IMR-90 (cell line): ENCODE measurements at regions of chr19 and their contacts with region 1.

Region 1: DNA sequence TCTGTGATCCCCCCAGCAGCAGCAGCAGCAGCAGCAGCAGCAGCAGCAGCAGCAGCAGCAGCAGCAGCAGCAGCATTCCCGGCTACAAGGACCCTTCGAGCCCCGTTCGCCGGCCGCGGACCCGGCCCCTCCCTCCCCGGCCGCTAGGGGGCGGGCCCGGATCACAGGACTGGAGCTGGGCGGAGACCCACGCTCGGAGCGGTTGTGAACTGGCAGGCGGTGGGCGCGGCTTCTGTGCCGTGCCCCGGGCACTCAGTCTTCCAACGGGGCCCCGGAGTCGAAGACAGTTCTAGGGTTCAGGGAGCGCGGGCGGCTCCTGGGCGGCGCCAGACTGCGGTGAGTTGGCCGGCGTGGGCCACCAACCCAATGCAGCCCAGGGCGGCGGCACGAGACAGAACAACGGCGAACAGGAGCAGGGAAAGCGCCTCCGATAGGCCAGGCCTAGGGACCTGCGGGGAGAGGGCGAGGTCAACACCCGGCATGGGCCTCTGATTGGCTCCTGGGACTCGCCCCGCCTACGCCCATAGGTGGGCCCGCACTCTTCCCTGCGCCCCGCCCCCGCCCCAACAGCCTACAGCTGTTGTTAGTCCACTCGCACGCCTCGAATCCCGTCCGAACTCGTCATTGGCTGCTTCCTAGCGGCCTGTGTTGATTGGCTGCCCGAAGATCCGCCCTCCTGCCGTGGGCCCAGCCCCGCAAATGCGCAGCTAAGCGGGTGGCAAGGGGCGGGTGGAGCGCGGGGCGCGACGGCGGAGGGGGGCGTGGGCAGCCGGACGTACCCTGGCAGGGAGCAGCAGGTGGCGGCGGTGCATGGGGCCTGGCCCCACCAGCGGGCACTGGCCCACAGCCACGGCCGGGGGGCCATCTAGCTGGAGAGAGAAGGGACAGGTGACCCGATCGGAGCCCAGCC is 1.4 kb upstream of the SIX5 start:
- DNase-seq: peak; percentile 97
- ATAC-seq: peak; percentile 63
- H3K4me3 ChIP-seq: peak overlapping the region; percentile 34
- H3K27ac ChIP-seq: peak overlapping the region; percentile 89
- H3K4me1 ChIP-seq: peaks cover 13% of the 10 kb centered on the region
- H3K27me3 ChIP-seq: no peaks in the 10 kb centered on the region
- CTCF ChIP-seq: peak; percentile 82
- POLR2A ChIP-seq: no peak
- RAD21 ChIP-seq: peak; percentile 67

Region 2: DNA sequence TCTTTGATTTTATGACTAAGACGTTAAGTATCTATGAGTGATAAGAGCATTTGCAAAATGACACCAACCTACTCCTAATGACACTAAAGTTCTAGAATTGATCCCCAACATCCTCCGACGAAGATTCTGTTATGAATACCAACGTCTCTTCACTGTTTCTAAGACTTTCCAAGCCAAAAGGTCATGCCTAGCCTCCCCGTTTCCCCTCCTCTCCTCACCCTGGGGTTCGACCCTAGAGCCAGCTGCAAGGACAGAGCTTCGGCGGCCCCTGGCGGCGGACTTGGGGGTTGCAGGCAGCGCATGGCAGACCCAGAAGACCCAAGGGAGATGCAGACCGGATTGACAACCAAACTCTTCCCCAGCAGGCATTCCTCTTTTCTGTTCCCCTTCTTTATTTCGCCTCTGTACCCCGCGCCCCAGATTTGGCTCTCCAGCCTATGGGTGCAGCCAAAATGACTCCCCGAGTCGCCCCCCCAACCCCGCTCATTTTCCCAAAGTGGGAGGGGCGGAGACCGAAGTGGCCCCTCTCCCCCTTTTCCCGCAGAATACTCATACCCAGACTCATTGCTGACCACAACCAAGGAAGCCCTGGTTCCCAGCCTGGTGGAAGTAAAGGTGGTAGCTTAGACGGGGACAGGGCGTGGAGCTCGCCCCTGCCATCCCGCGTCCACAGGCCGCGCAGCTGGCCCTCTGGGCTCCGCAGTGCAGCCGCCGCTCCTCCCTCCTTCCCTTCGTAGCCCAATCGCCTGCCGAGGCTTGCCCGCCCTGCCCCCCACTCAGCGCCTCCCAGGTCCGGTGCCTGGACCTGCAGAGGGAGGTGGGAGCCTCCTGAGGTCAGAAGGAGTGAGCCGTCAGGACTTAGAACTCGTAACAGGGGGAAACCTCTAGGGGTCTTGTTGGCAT is 127.2 kb before region 1 on chr19:
- CTCF ChIA-PET with region 1: no interaction called
- POLR2A ChIA-PET with region 1: interaction called, 17 read pairs
- dilution Hi-C with region 1: no loop called
- in situ Hi-C with region 1: no loop called
- intact Hi-C with region 1: no loop called
- DNase-seq: peak; percentile 61
- ATAC-seq: peak; percentile 19
- H3K4me3 ChIP-seq: no peak overlapping the region
- H3K27ac ChIP-seq: no peak overlapping the region
- H3K4me1 ChIP-seq: peaks cover 13% of the 10 kb centered on the region
- H3K27me3 ChIP-seq: no peaks in the 10 kb centered on the region
- CTCF ChIP-seq: peak; percentile 94
- POLR2A ChIP-seq: no peak
- RAD21 ChIP-seq: peak; percentile 88

Region 3: DNA sequence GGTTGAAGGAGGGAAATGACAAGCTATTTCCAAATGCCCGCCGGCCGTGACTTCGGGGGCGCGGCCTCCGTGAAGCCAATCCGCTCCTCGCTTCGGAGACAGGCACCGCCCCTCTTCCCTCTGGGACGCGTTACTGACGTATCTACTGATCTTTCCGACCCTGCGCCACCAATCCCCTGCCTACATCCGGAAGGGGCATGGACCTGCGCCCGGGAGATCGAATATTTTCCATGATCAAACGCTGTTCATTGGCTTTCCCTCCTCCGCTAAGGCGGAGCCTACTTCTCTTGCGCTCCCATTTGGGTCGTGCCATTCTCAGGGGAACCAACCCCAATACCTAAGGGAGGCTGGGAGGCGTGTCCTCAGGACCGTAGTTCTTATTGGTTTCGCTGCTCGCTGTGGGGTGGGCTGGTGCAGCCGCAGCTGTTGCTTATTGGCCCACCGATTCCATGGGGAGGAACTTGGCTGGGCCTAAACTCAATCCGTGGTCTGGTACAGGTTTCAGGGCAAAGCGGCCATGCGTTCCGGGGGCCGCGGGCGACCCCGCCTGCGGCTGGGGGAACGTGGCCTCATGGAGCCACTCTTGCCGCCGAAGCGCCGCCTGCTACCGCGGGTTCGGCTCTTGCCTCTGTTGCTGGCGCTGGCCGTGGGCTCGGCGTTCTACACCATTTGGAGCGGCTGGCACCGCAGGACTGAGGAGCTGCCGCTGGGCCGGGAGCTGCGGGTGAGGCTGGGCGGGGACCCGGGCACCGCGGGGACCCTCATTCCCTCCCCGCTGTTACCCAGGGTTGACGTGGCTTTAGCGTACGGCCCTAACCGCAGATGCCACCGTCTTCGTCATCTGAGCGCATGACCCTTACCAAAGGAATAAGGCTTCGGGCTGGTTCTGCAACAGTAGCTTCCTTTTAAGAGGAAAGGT is 78.0 kb before region 1 on chr19 and contains the start of gene QPCTL:
- CTCF ChIA-PET with region 1: interaction called, 4 read pairs
- POLR2A ChIA-PET with region 1: interaction called, 6 read pairs
- dilution Hi-C with region 1: no loop called
- in situ Hi-C with region 1: no loop called
- intact Hi-C with region 1: loop called (anchors 2 kb)
- DNase-seq: peak; percentile 100
- ATAC-seq: peak; percentile 94
- H3K4me3 ChIP-seq: peak within 1 kb of the TSS; percentile 89
- H3K27ac ChIP-seq: peak within 1 kb of the TSS; percentile 83
- H3K4me1 ChIP-seq: peaks cover 4% of the 10 kb centered on the region
- H3K27me3 ChIP-seq: no peaks in the 10 kb centered on the region
- CTCF ChIP-seq: no peak
- POLR2A ChIP-seq: peak; percentile 91
- RAD21 ChIP-seq: no peak
- total RNA-seq, gene QPCTL: 6.6 and 7.8 TPM in 2 replicates

Region 4: DNA sequence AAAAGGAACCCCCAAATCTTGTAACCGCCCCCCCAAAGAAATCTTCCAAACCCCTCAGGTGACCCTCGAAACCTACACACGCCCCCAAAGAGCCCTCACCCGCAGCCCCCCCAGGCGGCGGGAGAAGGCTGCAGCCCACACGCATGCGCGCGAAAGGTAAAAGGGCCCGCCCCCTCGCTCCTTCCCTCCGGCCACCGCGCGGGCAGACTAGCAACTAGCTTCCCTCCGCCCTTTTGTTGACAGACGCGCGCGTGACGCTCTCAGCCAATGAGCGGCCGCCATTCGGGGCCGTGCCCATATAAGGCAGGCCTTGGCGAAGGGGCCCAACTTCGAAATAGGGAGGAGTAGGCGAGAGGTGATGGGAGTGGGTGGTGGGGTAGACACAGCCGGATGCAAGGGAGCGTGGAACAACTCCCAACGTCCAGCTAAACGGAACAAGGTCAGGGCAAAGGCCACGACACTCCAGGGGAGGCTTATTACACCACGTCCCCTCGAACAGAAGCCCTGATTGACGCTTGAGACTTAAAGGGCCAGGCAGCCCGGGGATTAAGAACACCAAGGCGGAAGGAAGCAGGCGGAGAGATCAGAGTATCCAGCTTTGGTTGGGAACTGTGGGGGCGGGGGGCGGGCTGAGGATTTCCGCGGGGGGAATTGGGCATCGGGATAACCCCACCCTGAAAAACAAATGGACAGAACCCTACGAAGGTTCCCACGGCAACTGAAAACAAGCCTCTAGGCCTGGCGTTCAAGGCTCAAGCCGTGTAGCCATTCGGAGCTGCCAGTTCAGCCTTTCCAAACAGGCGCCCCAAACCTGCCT is 53.1 kb before region 1 on chr19:
- CTCF ChIA-PET with region 1: no interaction called
- POLR2A ChIA-PET with region 1: interaction called, 5 read pairs
- dilution Hi-C with region 1: no loop called
- in situ Hi-C with region 1: no loop called
- intact Hi-C with region 1: loop called (anchors 1 kb)
- DNase-seq: peak; percentile 97
- ATAC-seq: peak; percentile 95
- H3K4me3 ChIP-seq: peak overlapping the region; percentile 54
- H3K27ac ChIP-seq: peak overlapping the region; percentile 93
- H3K4me1 ChIP-seq: peaks cover 9% of the 10 kb centered on the region
- H3K27me3 ChIP-seq: no peaks in the 10 kb centered on the region
- CTCF ChIP-seq: peak; percentile 29; the same call in 1 of the 2 replicates
- POLR2A ChIP-seq: peak; percentile 81
- RAD21 ChIP-seq: no peak

Region 5: GRCh38 chr19:45730389-45731288 is 39.8 kb before region 1 on chr19 and contains the start of gene FBXO46:
- CTCF ChIA-PET with region 1: interaction called, 4 read pairs
- POLR2A ChIA-PET with region 1: interaction called, 5 read pairs
- dilution Hi-C with region 1: no loop called
- in situ Hi-C with region 1: no loop called
- intact Hi-C with region 1: loop called (anchors 2 kb)
- DNase-seq: peak; percentile 98
- ATAC-seq: peak; percentile 99
- H3K4me3 ChIP-seq: peak within 1 kb of the TSS; percentile 89
- H3K27ac ChIP-seq: peak within 1 kb of the TSS; percentile 50
- H3K4me1 ChIP-seq: peaks cover 3% of the 10 kb centered on the region; the same call in 1 of the 2 replicates
- H3K27me3 ChIP-seq: no peaks in the 10 kb centered on the region
- CTCF ChIP-seq: peak; percentile 35
- POLR2A ChIP-seq: peak; percentile 65; the same call in 1 of the 2 replicates
- RAD21 ChIP-seq: peak; percentile 8; the same call in 1 of the 2 replicates
- total RNA-seq, gene FBXO46: 2.2 and 3.0 TPM in 2 replicates

Region 6: GRCh38 chr19:45752639-45753038 is 17.8 kb before region 1 on chr19:
- CTCF ChIA-PET with region 1: interaction called, 8 read pairs
- POLR2A ChIA-PET with region 1: interaction called, 10 read pairs
- dilution Hi-C with region 1: no loop called
- in situ Hi-C with region 1: no loop called
- intact Hi-C with region 1: no loop called
- DNase-seq: no peak
- ATAC-seq: no peak
- H3K4me3 ChIP-seq: no peak overlapping the region
- H3K27ac ChIP-seq: no peak overlapping the region
- H3K4me1 ChIP-seq: no peaks in the 10 kb centered on the region
- H3K27me3 ChIP-seq: peaks cover under 1% of the 10 kb centered on the region; the same call in 1 of the 2 replicates
- CTCF ChIP-seq: no peak
- POLR2A ChIP-seq: no peak
- RAD21 ChIP-seq: no peak

Region 7: DNA sequence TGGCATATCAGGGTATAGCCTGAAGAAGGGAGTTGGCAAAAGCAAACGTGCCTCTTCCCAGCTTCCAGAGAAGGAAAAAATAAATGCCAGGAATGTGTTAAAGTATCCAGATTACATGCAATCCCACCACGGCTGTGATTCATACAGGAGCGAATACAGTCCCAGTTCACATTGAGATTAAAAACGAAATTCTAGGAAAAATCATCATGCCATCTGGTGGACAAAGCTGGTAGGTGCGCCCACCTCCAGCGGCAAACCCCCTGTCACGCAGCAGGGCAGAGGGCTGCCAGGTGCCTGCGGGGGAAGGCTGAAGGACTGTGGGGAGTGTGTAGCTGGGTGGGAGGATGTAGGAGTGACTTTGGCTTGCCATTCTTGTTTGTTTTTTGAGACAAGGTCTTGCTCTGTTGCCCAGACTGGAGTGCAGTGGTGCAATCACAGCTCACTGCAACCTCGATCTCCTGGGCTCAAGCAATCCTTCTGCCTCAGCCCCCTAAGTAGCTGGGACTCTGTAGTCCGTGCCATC is 28.6 kb after region 1 on chr19:
- CTCF ChIA-PET with region 1: interaction called, 24 read pairs
- POLR2A ChIA-PET with region 1: interaction called, 7 read pairs
- dilution Hi-C with region 1: no loop called
- in situ Hi-C with region 1: no loop called
- intact Hi-C with region 1: loop called (anchors 1 kb)
- DNase-seq: peak; percentile 83
- ATAC-seq: peak; percentile 92
- H3K4me3 ChIP-seq: no peak overlapping the region
- H3K27ac ChIP-seq: peak overlapping the region; percentile 44; the same call in 1 of the 2 replicates
- H3K4me1 ChIP-seq: peaks cover 8% of the 10 kb centered on the region
- H3K27me3 ChIP-seq: no peaks in the 10 kb centered on the region
- CTCF ChIP-seq: peak; percentile 73
- POLR2A ChIP-seq: no peak
- RAD21 ChIP-seq: peak; percentile 62

Region 8: GRCh38 chr19:45834970-45835369 is 64.5 kb after region 1 on chr19:
- CTCF ChIA-PET with region 1: no interaction called
- POLR2A ChIA-PET with region 1: no interaction called
- dilution Hi-C with region 1: no loop called
- in situ Hi-C with region 1: no loop called
- intact Hi-C with region 1: no loop called
- DNase-seq: no peak
- ATAC-seq: no peak
- H3K4me3 ChIP-seq: no peak overlapping the region
- H3K27ac ChIP-seq: no peak overlapping the region
- H3K4me1 ChIP-seq: no peaks in the 10 kb centered on the region
- H3K27me3 ChIP-seq: no peaks in the 10 kb centered on the region
- CTCF ChIP-seq: no peak
- POLR2A ChIP-seq: no peak
- RAD21 ChIP-seq: no peak

Region 9: GRCh38 chr19:45852145-45852750 is 81.8 kb after region 1 on chr19:
- CTCF ChIA-PET with region 1: no interaction called
- POLR2A ChIA-PET with region 1: no interaction called
- dilution Hi-C with region 1: no loop called
- in situ Hi-C with region 1: no loop called
- intact Hi-C with region 1: no loop called
- DNase-seq: no peak
- ATAC-seq: no peak
- H3K4me3 ChIP-seq: no peak overlapping the region
- H3K27ac ChIP-seq: no peak overlapping the region
- H3K4me1 ChIP-seq: no peaks in the 10 kb centered on the region
- H3K27me3 ChIP-seq: no peaks in the 10 kb centered on the region
- CTCF ChIP-seq: no peak
- POLR2A ChIP-seq: no peak
- RAD21 ChIP-seq: no peak